CD4-positive, alpha-beta memory T cell (primary cell): ENCODE measurements at regions of chr19 and their contacts with region 1.

Region 1: DNA sequence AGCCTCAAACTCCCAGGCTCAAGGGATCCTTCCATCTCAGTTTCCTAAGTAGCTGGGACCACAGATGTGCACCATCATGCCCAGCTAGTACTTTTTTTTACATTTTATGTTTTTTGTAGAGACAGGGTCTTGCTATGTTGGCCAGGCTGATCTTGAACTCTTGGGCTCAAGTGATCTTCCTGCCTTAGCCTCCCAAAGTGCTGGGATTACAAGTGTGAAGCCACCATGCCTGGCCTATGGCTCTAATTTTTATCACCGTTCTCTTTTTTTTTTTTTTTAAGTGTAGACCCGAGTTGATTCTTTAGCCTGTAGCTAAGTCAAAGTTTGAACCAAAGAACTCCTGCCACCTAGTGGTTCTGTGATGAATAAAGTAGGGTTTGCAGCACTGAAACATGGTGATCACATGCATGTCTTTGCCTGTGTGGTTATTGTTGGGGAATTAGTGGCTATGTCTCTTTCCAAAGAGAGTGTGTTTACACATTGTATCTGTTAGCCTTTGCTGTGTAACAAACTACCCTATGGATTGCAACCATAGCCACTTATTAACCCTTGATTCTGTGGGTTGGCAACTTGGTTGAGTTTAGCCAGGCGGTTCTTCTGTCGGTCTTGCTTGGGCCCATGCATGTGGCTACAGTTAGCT is 11.6 kb downstream of the NFILZ start:
- DNase-seq: peak in 4 of 5 donors; percentile 44 to 53 (median 48)
- H3K4me3 ChIP-seq: no peak overlapping the region
- H3K4me3 Mint-ChIP-seq: no peak overlapping the region
- H3K27ac ChIP-seq: no peak overlapping the region
- H3K27ac Mint-ChIP-seq: no peak overlapping the region
- H3K4me1 ChIP-seq: no peaks in the 10 kb centered on the region
- H3K4me1 Mint-ChIP-seq: peaks cover 0 to 4% (median under 1%) of the 10 kb centered on the region in 4 donors
- H3K27me3 ChIP-seq: no peaks in the 10 kb centered on the region
- H3K27me3 Mint-ChIP-seq: peaks cover 16 to 19% of the 10 kb centered on the region in 2 donors

Region 2: DNA sequence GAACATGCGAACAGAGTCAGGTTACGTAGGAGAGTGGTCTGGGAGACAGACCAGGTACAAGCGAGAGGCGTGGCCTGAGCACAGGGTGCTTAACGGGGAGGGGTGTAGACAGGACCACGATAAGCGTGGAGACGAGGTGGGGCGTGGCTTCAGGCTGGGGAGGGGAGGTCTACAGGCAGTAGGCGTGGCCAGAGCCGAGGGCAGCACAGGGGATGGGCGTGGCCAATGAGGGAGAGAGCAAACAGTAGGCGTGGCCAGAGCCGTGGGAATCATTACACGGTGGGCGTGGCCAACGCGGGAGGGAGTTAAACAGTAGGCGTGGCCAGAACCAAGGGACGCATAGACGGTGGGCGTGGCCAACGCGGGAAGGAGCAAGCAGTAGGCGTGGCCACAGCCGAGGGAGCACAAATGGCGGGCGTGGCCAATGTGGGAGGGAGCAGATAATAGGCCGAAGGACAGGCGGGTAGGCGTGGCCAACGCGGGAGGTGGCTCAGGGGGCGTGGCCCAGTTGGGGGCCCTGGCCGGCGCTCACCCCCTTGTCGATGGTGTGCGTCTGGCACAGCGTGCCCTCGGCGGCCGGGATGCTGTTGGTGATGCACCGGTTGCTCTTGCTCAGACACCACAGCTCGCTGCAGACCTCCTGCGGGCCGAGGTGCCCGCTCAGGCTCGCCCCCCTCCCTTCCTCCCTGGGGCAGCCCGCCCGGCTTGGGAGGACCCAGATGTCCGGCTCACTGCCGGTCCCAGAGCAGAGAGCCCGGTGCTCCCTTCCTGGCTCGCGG is 49.6 kb before region 1 on chr19:
- CTCF ChIA-PET with region 1: interaction called, 11 read pairs
- POLR2A ChIA-PET with region 1: no interaction called
- intact Hi-C with region 1: no loop called
- DNase-seq: peak; percentile 96 to 97 (median 96)
- H3K4me3 ChIP-seq: peak overlapping the region; percentile 18 to 73
- H3K4me3 Mint-ChIP-seq: peak overlapping the region; percentile 82 to 90 (median 88)
- H3K27ac ChIP-seq: no peak overlapping the region
- H3K27ac Mint-ChIP-seq: peak overlapping the region; percentile 75 to 95 (median 90)
- H3K4me1 ChIP-seq: peaks cover 19% of the 10 kb centered on the region
- H3K4me1 Mint-ChIP-seq: peaks cover 16 to 30% (median 22%) of the 10 kb centered on the region in 4 donors
- H3K27me3 ChIP-seq: no peaks in the 10 kb centered on the region
- H3K27me3 Mint-ChIP-seq: no peaks in the 10 kb centered on the region

Region 3: DNA sequence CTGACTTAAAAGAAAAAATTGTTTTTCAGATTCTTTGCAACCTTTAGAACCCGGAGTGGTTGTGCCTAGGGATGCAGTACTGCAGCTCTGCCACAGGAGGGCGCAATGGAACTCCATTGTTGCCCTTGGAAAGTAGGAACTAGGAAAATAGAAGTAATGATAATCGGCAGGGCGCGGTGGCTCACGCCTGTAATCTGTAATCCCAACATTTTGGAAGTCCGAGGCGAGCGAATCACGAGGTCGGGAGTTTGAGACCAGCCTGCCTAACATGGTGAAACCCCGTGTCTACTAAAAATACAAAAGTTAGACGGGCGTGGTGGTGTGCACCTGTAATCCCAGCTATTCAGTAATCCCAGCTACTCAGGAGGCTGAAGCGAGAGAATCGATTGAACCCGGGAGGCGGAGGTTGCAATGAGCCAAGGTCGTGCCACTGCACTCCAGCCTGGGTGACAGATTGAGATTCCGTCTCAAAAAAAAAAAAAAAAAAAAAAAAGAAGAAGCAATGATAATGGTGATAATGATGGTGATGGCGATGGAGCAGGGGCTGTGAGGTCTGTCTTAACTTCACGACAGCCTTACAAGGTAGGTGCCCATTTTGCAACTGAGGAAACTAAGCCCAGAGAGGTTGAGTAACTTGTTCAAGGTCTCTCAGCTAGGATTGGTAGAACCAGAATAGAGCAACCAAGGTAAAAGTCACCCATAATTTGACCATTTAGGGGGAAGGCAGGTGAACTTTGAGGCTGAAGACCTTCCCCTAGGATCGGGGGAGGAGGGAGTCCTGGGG is 26.0 kb before region 1 on chr19:
- CTCF ChIA-PET with region 1: interaction called, 14 read pairs
- POLR2A ChIA-PET with region 1: no interaction called
- intact Hi-C with region 1: no loop called
- DNase-seq: peak; percentile 51 to 63 (median 56)
- H3K4me3 ChIP-seq: no peak overlapping the region
- H3K4me3 Mint-ChIP-seq: peak overlapping the region in 4 of 8 donors; percentile 22 to 64 (median 44)
- H3K27ac ChIP-seq: no peak overlapping the region
- H3K27ac Mint-ChIP-seq: peak overlapping the region in 6 of 7 donors; percentile 11 to 57 (median 46)
- H3K4me1 ChIP-seq: peaks cover 20% of the 10 kb centered on the region
- H3K4me1 Mint-ChIP-seq: peaks cover 9 to 27% (median 17%) of the 10 kb centered on the region in 4 donors
- H3K27me3 ChIP-seq: no peaks in the 10 kb centered on the region
- H3K27me3 Mint-ChIP-seq: peaks cover 3 to 8% of the 10 kb centered on the region in 2 donors

Region 4: GRCh38 chr19:8681345-8682029 is 39.5 kb after region 1 on chr19:
- CTCF ChIA-PET with region 1: no interaction called
- POLR2A ChIA-PET with region 1: no interaction called
- intact Hi-C with region 1: no loop called
- DNase-seq: no peak
- H3K4me3 ChIP-seq: no peak overlapping the region
- H3K4me3 Mint-ChIP-seq: peak overlapping the region in 1 of 8 donors; percentile 28
- H3K27ac ChIP-seq: no peak overlapping the region
- H3K27ac Mint-ChIP-seq: peak overlapping the region in 4 of 7 donors; percentile 13 to 77 (median 67)
- H3K4me1 ChIP-seq: peaks cover 4% of the 10 kb centered on the region
- H3K4me1 Mint-ChIP-seq: peaks cover 4 to 29% (median 20%) of the 10 kb centered on the region in 4 donors
- H3K27me3 ChIP-seq: no peaks in the 10 kb centered on the region
- H3K27me3 Mint-ChIP-seq: peaks cover 0 to 7% of the 10 kb centered on the region in 2 donors